ENCODE measurements at regions of chr16 and their contacts with region 1.

Region 1: GRCh38 chr16:57500578-57501111 is 14.4 kb upstream of the DOK4 start:
- DNase-seq: no peak
- ATAC-seq: peak; percentile 31 to 45 (median 34)
- H3K4me3 ChIP-seq: no peak overlapping the region
- H3K4me3 Mint-ChIP-seq: no peak overlapping the region
- H3K27ac ChIP-seq: no peak overlapping the region
- H3K27ac Mint-ChIP-seq: no peak overlapping the region
- H3K4me1 ChIP-seq: peaks cover 3 to 19% of the 10 kb centered on the region in 2 experiments
- H3K4me1 Mint-ChIP-seq: peaks cover 8 to 10% (median 10%) of the 10 kb centered on the region in 3 donors
- H3K27me3 ChIP-seq: peaks cover 0 to 17% of the 10 kb centered on the region in 2 experiments
- H3K27me3 Mint-ChIP-seq: peaks cover 0 to 3% of the 10 kb centered on the region in 2 donors

Region 2: DNA sequence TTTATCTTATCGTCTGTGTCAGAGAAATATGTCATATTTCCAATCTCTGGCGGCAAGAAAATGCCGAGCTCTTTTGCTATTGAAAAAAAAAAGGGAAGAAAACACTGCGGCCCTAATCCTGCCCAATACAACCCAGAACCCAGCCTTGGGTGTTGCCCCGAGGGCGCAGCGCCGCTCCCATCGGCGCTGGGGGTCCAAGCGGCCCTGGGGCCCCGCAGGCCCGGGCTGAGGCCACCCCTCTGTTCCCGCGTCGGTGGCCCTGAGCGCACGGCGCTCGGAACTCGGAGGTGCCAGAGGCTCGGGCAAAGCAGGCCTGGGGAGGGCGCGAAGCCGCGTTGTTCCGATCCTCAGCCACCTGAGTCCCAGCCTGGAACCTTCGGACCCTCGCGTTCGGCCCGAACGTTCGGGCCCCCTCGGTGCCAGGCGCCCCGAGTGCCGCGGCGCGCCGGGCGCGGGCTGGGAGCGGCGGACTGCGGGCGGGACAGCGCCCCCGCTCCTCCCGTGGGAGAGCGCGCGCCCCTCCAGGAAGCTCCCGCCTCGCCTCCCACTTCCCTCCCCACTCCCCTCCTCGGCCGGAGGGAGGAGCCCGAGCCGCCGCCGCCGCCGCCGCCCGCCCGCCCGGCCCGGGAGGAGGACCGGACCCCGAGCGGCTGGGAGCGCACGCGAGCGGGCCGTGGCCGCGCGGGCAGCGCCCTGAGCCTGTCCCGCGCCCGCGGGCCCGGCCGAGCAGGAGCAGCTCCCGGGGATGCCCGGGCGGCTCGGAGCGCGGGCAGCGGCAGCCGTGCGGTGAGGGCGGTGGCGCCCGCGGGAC is 408.5 kb before region 1 on chr16 and contains the start of gene CPNE2:
- CTCF ChIA-PET with region 1: no interaction called
- POLR2A ChIA-PET with region 1: no interaction called
- DNase-seq: peak in 5 of 35 experiments; percentile 7 to 31 (median 13)
- ATAC-seq: peak; percentile 55 to 72 (median 66)
- H3K4me3 ChIP-seq: peak within 1 kb of the TSS; percentile 41 to 74
- H3K4me3 Mint-ChIP-seq: peak within 1 kb of the TSS; percentile 67 to 77 (median 74)
- H3K27ac ChIP-seq: no peak within 1 kb of the TSS
- H3K27ac Mint-ChIP-seq: peak within 1 kb of the TSS in 1 of 2 donors; percentile 34
- H3K4me1 ChIP-seq: peaks cover 2 to 23% of the 10 kb centered on the region in 2 experiments
- H3K4me1 Mint-ChIP-seq: peaks cover 10 to 14% (median 14%) of the 10 kb centered on the region in 3 donors
- H3K27me3 ChIP-seq: peaks cover 0 to 28% of the 10 kb centered on the region in 2 experiments
- H3K27me3 Mint-ChIP-seq: peaks cover 0 to 10% of the 10 kb centered on the region in 2 donors
- total RNA-seq, gene CPNE2: 5.5 to 9.3 (median 6.1) TPM

Region 3: GRCh38 chr16:57544119-57544653 is 43.5 kb after region 1 on chr16:
- CTCF ChIA-PET with region 1: interaction called in 1 of 2 experiments, 3 read pairs
- POLR2A ChIA-PET with region 1: interaction called in 1 of 2 experiments, 14 read pairs
- DNase-seq: peak in 2 of 35 experiments; percentile 41 to 54
- ATAC-seq: peak in 1 of 4 experiments; percentile 43
- H3K4me3 ChIP-seq: peak overlapping the region; percentile 56 to 64
- H3K4me3 Mint-ChIP-seq: peak overlapping the region; percentile 67 to 71 (median 67)
- H3K27ac ChIP-seq: peak overlapping the region; percentile 6
- H3K27ac Mint-ChIP-seq: peak overlapping the region; percentile 66 to 76
- H3K4me1 ChIP-seq: peaks cover 29 to 64% of the 10 kb centered on the region in 2 experiments
- H3K4me1 Mint-ChIP-seq: peaks cover 46 to 59% (median 50%) of the 10 kb centered on the region in 3 donors
- H3K27me3 ChIP-seq: no peaks in the 10 kb centered on the region
- H3K27me3 Mint-ChIP-seq: no peaks in the 10 kb centered on the region